CD14-positive monocyte (primary cell): ENCODE measurements at regions of chr14 and their contacts with region 1.

Region 1: GRCh38 chr14:96501742-96502617 is at the start of gene PAPOLA:
- DNase-seq: peak; percentile 96 to 98 (median 96)
- H3K4me3 ChIP-seq: peak within 1 kb of the TSS; percentile 56 to 99 (median 97)
- H3K4me3 Mint-ChIP-seq: peak within 1 kb of the TSS; percentile 97 to 99
- H3K27ac ChIP-seq: peak within 1 kb of the TSS; percentile 96 to 98
- H3K27ac Mint-ChIP-seq: peak within 1 kb of the TSS; percentile 96 to 99 (median 98)
- H3K4me1 ChIP-seq: peaks cover 37 to 53% of the 10 kb centered on the region in 2 donors
- H3K4me1 Mint-ChIP-seq: peaks cover 60% of the 10 kb centered on the region
- H3K27me3 ChIP-seq: no peaks in the 10 kb centered on the region
- H3K27me3 Mint-ChIP-seq: peaks cover 0 to 5% (median 4%) of the 10 kb centered on the region in 3 donors
- CTCF ChIP-seq: no peak
- polyA plus RNA-seq, gene PAPOLA: 57.9 to 87.5 (median 80.3) TPM

Region 2: DNA sequence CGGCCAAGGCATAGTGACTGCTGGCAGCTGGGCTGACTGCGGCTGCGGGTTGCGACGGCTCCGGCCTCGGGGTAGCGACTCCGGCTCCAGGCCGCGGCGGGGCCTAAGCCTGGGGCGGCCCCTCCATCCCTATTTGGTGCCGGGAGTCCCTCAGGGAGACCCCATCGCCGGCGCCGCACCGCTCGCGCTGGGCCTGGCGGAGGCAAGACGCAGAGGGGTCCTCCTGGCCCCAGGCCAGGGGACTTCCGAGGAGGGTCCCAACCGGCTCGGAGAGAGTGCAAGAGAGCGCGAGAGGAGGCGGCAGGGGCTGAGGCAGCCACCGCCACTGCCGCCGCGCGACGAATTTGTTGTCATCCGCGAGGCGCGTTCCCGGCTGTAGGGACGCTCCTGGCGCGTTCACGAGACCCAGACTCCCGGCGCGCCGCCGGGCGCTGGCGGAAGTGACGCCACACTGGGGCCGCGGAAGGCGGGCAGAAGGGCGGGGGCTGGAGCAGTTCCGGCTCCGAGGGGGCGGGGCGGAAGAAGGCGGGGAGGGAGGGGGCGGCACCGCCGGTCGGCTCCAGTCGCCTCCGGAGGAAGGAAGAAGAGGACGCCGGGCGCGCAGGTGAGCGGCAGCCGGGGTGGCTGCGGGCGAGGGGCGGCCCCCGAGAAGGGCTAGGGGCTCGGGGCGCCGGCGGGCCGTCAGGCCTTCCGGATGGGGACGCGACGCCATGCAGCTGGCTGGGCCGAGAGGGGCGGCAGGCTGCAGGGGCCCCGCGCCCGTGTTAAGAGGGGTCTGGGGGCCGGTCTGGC is 138.8 kb before region 1 on chr14 and contains the starts of genes ATG2B and GSKIP:
- intact Hi-C with region 1: loop called in 1 of 2 experiments (anchors 10 kb)
- DNase-seq: peak; percentile 89 to 96 (median 95)
- H3K4me3 ChIP-seq: peak within 1 kb of the TSS; percentile 81 to 95 (median 91)
- H3K4me3 Mint-ChIP-seq: peak within 1 kb of the TSS; percentile 88 to 91
- H3K27ac ChIP-seq: peak within 1 kb of the TSS; percentile 64 to 90
- H3K27ac Mint-ChIP-seq: peak within 1 kb of the TSS; percentile 70 to 87 (median 82)
- H3K4me1 ChIP-seq: peaks cover 31 to 33% of the 10 kb centered on the region in 2 donors
- H3K4me1 Mint-ChIP-seq: peaks cover 45% of the 10 kb centered on the region
- H3K27me3 ChIP-seq: no peaks in the 10 kb centered on the region
- H3K27me3 Mint-ChIP-seq: no peaks in the 10 kb centered on the region
- CTCF ChIP-seq: no peak
- polyA plus RNA-seq, gene ATG2B: 0.94 to 6.7 (median 1.3) TPM
- polyA plus RNA-seq, gene GSKIP: 3.1 to 24.7 (median 20.7) TPM

Region 3: DNA sequence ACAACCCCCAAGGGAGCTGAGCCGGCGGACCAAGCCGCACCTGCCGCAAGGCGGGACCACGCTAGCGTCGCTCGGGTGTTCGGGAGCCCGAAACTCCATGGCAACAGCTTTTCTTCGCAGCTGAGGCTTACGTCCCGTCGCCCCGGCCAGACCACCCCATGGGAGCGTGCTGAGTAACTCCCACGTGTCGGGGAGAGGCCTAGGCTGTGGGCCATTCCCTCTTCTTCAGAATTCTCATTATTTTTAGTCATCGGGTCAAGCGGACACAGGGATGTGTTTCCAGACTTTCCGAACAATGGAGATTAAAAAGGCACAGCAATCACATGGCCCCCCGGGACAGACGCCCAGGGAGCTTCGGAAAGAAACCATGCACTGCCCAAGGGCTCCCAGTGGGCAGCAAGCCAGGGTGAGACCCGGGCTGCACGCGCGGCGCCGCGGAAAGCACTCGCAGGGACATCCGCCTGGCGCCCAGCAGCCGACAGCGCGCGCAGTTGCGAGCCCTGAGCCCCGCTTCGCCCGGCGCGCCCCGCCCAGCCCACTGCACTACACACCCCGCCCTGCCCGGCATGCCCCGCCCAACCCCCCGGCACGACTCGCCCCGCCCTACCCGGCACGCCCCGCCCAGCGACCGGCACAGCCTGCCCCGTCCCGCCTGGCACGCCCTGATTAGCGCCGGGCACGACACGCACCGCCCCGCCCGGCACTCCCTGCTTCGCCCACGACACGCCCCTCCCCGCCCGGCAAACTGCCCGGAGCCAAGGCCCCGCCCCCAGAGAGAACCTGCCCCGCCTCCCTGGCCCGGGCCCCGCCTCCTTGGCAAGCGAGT is 110.5 kb before region 1 on chr14:
- intact Hi-C with region 1: loop called in 1 of 2 experiments (anchors 2 kb)
- DNase-seq: peak; percentile 94 to 97 (median 97)
- H3K4me3 ChIP-seq: peak overlapping the region; percentile 60 to 93 (median 71)
- H3K4me3 Mint-ChIP-seq: peak overlapping the region; percentile 86 to 95
- H3K27ac ChIP-seq: peak overlapping the region in 1 of 2 donors; percentile 41
- H3K27ac Mint-ChIP-seq: peak overlapping the region in 4 of 7 donors; percentile 19 to 85 (median 57)
- H3K4me1 ChIP-seq: peaks cover 14 to 19% of the 10 kb centered on the region in 2 donors
- H3K4me1 Mint-ChIP-seq: peaks cover 11% of the 10 kb centered on the region
- H3K27me3 ChIP-seq: peaks cover 15 to 32% of the 10 kb centered on the region in 2 donors
- H3K27me3 Mint-ChIP-seq: peaks cover 24 to 47% (median 33%) of the 10 kb centered on the region in 3 donors
- CTCF ChIP-seq: no peak

Region 4: DNA sequence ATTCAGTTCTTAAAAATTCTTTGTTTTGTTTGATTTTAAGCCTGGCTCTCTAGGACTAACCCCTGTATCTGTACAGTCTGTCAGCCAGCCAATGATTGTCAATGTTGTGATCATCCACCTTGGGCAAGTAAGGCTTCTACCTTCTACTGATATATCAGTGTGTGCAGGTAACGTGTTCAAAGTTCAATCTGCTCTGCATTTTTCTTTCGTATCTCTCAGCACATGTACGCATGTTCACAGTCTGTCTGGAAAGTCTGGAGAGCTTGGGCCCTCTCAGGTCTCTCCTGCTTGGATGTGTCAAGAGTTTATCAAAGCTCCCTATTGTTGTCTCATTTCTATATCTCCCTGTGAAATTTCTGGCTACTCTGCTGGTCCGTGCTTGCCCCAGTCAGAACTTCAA is 156.6 kb after region 1 on chr14:
- intact Hi-C with region 1: no loop called
- DNase-seq: no peak
- H3K4me3 ChIP-seq: no peak overlapping the region
- H3K4me3 Mint-ChIP-seq: no peak overlapping the region
- H3K27ac ChIP-seq: no peak overlapping the region
- H3K27ac Mint-ChIP-seq: no peak overlapping the region
- H3K4me1 ChIP-seq: no peaks in the 10 kb centered on the region
- H3K4me1 Mint-ChIP-seq: no peaks in the 10 kb centered on the region
- H3K27me3 ChIP-seq: peaks cover 0 to 2% of the 10 kb centered on the region in 2 donors
- H3K27me3 Mint-ChIP-seq: peaks cover 5 to 27% (median 12%) of the 10 kb centered on the region in 3 donors
- CTCF ChIP-seq: no peak

Region 5: DNA sequence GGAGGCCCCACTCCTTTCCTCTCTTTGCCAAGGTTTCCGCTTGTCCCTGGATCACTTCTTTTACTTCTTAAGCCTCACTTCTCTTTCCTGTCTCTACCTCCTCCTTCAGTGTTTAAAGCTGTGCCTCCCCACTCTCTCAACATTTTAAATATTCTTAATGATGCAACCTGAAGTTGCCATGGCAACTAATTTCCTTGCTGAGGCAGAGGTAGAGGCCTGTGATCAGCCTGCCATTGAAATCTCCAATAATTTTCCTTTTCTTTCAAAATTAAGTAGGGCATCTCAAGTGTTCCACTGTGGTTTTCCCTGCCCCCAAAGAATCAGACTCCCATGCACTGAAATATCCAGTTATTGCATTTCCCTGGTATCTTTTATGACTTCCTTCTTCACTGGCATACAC is 186.6 kb after region 1 on chr14:
- intact Hi-C with region 1: no loop called
- DNase-seq: no peak
- H3K4me3 ChIP-seq: no peak overlapping the region
- H3K4me3 Mint-ChIP-seq: no peak overlapping the region
- H3K27ac ChIP-seq: no peak overlapping the region
- H3K27ac Mint-ChIP-seq: no peak overlapping the region
- H3K4me1 ChIP-seq: no peaks in the 10 kb centered on the region
- H3K4me1 Mint-ChIP-seq: peaks cover 3% of the 10 kb centered on the region
- H3K27me3 ChIP-seq: no peaks in the 10 kb centered on the region
- H3K27me3 Mint-ChIP-seq: peaks cover 3 to 7% (median 3%) of the 10 kb centered on the region in 3 donors
- CTCF ChIP-seq: no peak

Region 6: GRCh38 chr14:96796851-96797581 is 295.0 kb after region 1 on chr14 and contains the start of gene VRK1:
- intact Hi-C with region 1: loop called in 1 of 2 experiments (anchors 10 kb)
- DNase-seq: peak; percentile 92 to 95 (median 93)
- H3K4me3 ChIP-seq: peak within 1 kb of the TSS; percentile 63 to 72 (median 71)
- H3K4me3 Mint-ChIP-seq: peak within 1 kb of the TSS; percentile 84 to 91
- H3K27ac ChIP-seq: peak within 1 kb of the TSS; percentile 22 to 47
- H3K27ac Mint-ChIP-seq: peak within 1 kb of the TSS; percentile 51 to 86 (median 80)
- H3K4me1 ChIP-seq: peaks cover 25 to 42% of the 10 kb centered on the region in 2 donors
- H3K4me1 Mint-ChIP-seq: peaks cover 35% of the 10 kb centered on the region
- H3K27me3 ChIP-seq: no peaks in the 10 kb centered on the region
- H3K27me3 Mint-ChIP-seq: peaks cover 0 to 3% (median 2%) of the 10 kb centered on the region in 3 donors
- CTCF ChIP-seq: no peak
- polyA plus RNA-seq, gene VRK1: 5.5 to 14.3 (median 13.2) TPM